ENCODE measurements at regions of chr2 and their contacts with region 1.

Region 1: DNA sequence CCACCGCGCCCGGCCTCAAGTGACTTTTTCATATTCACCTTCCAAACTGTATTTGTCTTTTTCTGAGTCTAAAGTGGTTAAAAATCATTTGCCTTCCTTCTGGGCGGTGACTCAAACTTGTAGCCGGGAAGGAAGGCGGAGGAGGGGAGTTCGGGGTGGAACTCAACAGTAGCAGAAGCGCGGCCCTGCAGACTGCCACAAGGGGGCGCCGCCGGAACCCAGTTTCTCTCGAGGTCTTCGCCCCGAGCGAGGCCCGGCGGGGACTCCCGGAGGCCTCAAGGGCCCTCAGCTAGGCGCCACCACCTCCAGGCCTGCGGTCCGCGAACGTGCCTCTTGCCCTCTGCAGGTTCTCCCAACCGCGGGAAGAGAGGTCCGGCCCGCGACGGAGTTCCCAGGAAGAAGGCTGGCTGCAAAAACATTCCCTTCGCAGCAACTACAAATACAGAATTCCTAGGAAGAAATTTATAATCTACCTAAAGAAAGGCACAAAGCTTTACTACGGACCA is 16.8 kb upstream of the ITM2C start:
- DNase-seq: peak; percentile 94
- H3K4me3 Mint-ChIP-seq: peak overlapping the region; percentile 28
- H3K27ac Mint-ChIP-seq: no peak overlapping the region
- H3K4me1 Mint-ChIP-seq: no peaks in the 10 kb centered on the region
- H3K27me3 Mint-ChIP-seq: peaks cover 48% of the 10 kb centered on the region
- CTCF ChIP-seq: peak; percentile 95

Region 2: DNA sequence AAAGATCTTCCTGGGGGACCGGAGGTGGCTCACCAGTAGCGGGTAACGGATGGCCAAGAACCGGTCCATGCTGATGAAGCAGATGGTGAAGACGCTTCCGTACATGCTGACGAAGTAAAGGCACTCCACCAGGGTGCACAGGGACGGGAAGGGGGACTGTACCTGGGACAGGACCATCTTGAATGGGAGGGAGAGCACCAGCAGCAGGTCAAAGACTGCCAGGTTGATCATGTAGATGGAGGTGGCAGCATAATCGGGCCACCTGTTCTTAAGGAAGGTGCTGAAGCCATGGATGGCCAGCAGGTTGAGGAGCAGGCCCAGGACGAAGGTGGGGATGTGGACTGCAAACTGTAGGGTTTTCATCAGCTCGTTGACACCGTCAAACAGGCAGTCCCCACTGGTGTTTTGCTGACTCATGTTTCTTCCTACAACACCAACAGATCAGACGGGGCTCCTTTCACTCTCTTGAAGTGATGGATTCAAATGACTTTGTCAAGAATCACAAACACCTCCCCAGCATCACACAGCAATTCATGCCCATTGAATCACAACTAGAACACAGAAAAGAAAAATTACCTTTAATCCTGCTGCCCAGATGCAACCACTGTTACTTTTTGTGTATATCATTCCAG is 62.7 kb after region 1 on chr2:
- CTCF ChIA-PET with region 1: no interaction called
- intact Hi-C with region 1: loop called (anchors 2 kb)
- DNase-seq: no peak
- H3K4me3 Mint-ChIP-seq: no peak overlapping the region
- H3K27ac Mint-ChIP-seq: no peak overlapping the region
- H3K4me1 Mint-ChIP-seq: no peaks in the 10 kb centered on the region
- H3K27me3 Mint-ChIP-seq: peaks cover 88% of the 10 kb centered on the region
- CTCF ChIP-seq: no peak

Region 3: GRCh38 chr2:230924470-230925341 is 76.8 kb after region 1 on chr2 and contains the start of gene GPR55:
- CTCF ChIA-PET with region 1: no interaction called
- intact Hi-C with region 1: no loop called
- DNase-seq: peak; percentile 27
- H3K4me3 Mint-ChIP-seq: no peak within 1 kb of the TSS
- H3K27ac Mint-ChIP-seq: no peak within 1 kb of the TSS
- H3K4me1 Mint-ChIP-seq: no peaks in the 10 kb centered on the region
- H3K27me3 Mint-ChIP-seq: peaks cover 79% of the 10 kb centered on the region
- CTCF ChIP-seq: peak; percentile 19
- total RNA-seq, gene GPR55: not detected in 2 replicates

Region 4: GRCh38 chr2:230968921-230969658 is 121.2 kb after region 1 on chr2:
- CTCF ChIA-PET with region 1: no interaction called
- intact Hi-C with region 1: no loop called
- DNase-seq: no peak
- H3K4me3 Mint-ChIP-seq: peak overlapping the region; percentile 48
- H3K27ac Mint-ChIP-seq: no peak overlapping the region
- H3K4me1 Mint-ChIP-seq: peaks cover 16% of the 10 kb centered on the region
- H3K27me3 Mint-ChIP-seq: no peaks in the 10 kb centered on the region
- CTCF ChIP-seq: no peak

Measured in Calu3 (cell line).